Sigmoid colon (tissue), 7 donors: ENCODE measurements at regions of chr1 and their contacts with region 1.

Region 1: GRCh38 chr1:145963995-145964901 is at the starts of genes ANKRD34A and POLR3GL:
- DNase-seq: peak; percentile 98
- H3K4me3 ChIP-seq: peak within 1 kb of the TSS; percentile 54 to 70 (median 58)
- H3K27ac ChIP-seq: peak within 1 kb of the TSS; percentile 95 to 100 (median 96)
- H3K4me1 ChIP-seq: peaks cover 0 to 56% (median 45%) of the 10 kb centered on the region in 4 donors
- H3K27me3 ChIP-seq: no peaks in the 10 kb centered on the region
- CTCF ChIP-seq: no peak
- EP300 ChIP-seq: no peak
- POLR2A ChIP-seq: peak; percentile 92
- total RNA-seq, gene ANKRD34A: 0.33 to 1.9 (median 1.0) TPM
- total RNA-seq, gene POLR3GL: 23.1 to 32.8 (median 27.4) TPM

Region 2: GRCh38 chr1:145871994-145872924 is 92.0 kb before region 1 on chr1:
- intact Hi-C with region 1: no loop called
- DNase-seq: peak; percentile 89
- H3K4me3 ChIP-seq: peak overlapping the region; percentile 33 to 57 (median 55)
- H3K27ac ChIP-seq: peak overlapping the region; percentile 87 to 89 (median 88)
- H3K4me1 ChIP-seq: peaks cover 0 to 31% (median 22%) of the 10 kb centered on the region in 4 donors
- H3K27me3 ChIP-seq: no peaks in the 10 kb centered on the region
- CTCF ChIP-seq: no peak
- EP300 ChIP-seq: no peak
- POLR2A ChIP-seq: peak in 1 of 2 donors; percentile 20

Region 3: DNA sequence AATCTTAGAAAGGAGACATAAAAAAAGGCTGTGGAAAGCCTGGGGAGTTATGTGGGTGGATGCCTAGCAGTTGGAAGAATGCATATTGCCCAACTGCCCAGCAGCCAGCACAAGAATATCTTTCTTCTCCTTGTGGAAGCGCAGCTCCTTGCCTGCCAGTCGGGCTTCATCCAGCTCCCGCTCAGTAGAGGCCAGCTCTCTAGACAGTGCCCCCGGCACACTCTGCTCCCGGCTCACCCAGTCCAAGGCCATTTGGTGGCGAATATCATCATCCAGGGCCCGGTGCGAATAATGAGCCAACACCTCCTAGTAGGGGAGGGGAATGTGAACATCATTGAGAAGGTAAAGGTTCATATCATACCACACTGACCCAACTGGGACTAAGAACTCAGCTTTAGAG is 28.0 kb before region 1 on chr1:
- intact Hi-C with region 1: no loop called
- DNase-seq: no peak
- H3K4me3 ChIP-seq: no peak overlapping the region
- H3K27ac ChIP-seq: no peak overlapping the region
- H3K4me1 ChIP-seq: no peaks in the 10 kb centered on the region
- H3K27me3 ChIP-seq: no peaks in the 10 kb centered on the region
- CTCF ChIP-seq: no peak
- EP300 ChIP-seq: no peak
- POLR2A ChIP-seq: no peak

Region 4: DNA sequence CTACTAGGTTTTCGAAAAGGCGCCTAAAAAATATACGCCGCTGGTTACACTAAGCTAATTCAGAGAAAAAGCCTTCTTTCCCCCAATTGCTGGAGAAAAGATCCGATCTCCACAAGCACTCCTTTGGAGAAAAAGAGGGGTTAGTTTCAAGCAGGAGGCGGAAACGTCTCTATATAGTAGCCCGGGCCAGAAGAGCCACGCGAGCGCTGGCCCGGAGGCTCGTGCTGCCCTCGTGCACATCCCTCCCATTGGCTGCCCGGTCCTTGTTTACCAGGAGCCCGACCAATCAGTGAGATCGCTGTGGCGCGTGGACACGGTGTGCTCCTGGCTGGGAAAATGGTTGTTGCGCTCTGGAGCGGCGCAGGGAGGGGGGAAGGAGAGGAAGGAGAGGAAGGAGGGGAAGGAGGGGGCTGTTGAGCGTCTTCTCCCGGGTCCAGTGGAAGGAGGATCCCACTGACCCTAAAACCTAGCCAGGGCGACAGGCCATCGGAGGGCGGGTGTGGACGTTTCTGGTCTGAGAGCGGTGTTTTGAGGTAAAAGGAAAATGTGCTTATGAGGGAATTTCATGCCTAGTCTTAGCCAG is 32.3 kb after region 1 on chr1 and contains the start of gene TXNIP:
- intact Hi-C with region 1: loop called (anchors 5 kb)
- DNase-seq: peak; percentile 100
- H3K4me3 ChIP-seq: peak within 1 kb of the TSS; percentile 72 to 93 (median 88)
- H3K27ac ChIP-seq: peak within 1 kb of the TSS; percentile 92 to 95 (median 94)
- H3K4me1 ChIP-seq: peaks cover 0 to 48% (median 41%) of the 10 kb centered on the region in 4 donors
- H3K27me3 ChIP-seq: no peaks in the 10 kb centered on the region
- CTCF ChIP-seq: no peak
- EP300 ChIP-seq: peak in 2 of 4 donors; percentile 80 to 85
- POLR2A ChIP-seq: peak; percentile 98
- total RNA-seq, gene TXNIP: 1,623 to 4,609 (median 1,842) TPM